ENCODE measurements at regions of chr9 and their contacts with region 1.

Region 1: GRCh38 chr9:113583551-113584427 is 120.3 kb downstream of the RGS3 start:
- DNase-seq: no peak
- ATAC-seq: no peak

Region 2: GRCh38 chr9:113446323-113446740 is 137.5 kb before region 1 on chr9:
- intact Hi-C with region 1: loop called in 1 of 2 experiments (anchors 2 kb)
- DNase-seq: no peak
- ATAC-seq: peak; percentile 63

Region 3: DNA sequence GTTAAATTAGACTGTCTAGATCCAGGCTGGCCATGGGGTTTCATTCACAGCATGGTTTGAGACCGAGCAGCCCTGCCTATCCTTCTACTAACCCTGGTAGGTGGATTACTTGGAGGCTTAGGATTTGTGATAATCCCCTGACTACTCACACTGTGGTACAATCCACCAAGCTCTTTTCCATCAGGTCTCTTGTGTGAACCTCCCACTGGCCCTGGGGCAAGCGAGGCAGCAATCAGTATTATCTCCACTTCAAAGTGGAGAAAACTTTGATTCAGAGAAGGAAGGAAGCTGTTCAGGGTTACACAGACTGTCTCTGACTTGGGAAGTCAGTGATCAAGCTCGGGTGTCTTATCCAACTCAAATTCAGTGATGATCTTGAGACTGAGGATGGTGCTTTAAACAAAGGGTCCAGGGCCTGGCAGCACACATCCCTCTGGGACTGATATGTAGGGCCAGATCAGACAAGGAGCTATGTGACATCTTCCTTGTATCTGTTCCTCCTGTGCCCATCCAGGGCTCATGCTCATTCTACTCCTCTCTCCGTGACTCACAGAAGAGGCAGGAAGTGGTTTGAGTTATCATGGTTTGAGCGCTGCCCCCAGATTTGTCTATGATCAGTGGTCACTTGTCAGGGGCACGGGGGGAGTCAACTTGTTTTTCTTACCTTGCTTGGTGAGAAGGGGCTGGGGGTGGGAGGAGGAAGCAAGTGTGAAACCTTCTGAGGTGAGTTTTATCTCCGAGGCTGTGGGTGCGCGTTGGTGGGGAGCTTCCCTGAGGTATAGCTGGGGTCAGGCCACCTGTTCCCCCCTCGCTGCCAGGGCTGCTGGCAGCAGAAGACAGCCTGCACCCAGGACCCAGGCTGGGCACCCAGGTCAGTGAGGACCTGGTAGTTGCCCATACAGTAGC is 71.7 kb before region 1 on chr9:
- intact Hi-C with region 1: no loop called
- DNase-seq: no peak
- ATAC-seq: no peak

Region 4: DNA sequence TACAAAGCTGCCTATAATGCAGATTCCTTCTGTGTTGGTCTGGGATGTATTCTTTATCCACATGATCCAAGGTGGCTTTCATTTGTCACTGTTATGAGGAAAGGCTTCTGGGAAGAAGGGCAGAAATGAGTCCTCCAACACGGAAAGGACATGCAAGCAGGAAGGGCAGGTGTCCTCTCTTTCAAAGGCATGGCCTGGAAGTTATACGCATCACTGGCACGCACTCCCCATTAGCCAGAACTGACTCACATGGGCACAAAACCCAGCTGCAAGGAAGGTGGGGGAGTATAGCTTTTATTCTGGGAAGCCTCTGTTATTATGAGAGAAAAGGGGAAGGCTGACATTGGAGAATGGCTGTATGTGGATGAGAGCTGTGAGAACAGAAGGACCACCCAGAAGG is 151.0 kb after region 1 on chr9:
- intact Hi-C with region 1: no loop called
- DNase-seq: no peak
- ATAC-seq: no peak

Region 5: DNA sequence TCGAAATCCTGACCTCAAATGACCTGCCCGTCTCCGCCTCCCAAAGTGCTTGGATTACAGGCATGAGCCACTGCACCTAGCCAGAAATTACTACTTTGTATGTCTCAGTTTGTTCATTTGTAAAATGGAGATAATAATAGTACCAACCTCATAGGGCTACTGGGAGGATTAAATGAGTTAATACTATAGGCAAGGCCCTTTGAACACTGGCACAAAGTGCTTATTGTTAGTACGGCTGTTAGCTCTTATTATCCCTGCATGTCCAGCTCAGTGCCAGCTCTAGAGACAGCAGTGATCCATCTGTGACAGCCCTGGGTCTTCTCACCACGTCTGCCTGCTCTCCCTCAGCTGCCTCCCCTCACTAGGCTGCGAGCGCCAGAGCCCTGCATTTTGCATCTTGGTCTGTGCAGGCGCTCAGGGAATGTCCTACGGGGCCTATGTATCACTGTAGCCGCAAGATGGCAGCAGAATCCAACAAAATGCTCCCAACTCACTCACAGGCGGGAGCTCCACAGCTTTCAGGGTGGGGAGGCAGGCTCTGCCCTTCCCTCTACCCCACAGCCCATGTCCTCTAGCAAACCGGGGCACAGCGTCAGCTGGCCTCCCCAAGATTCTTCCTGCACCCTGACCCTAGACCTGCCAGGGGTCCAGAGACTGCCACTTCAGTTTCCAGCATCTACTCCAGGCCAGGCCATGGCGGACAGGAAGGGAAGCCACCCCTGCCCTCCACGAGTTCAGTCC is 821.7 kb after region 1 on chr9:
- intact Hi-C with region 1: no loop called
- DNase-seq: peak; percentile 74 to 83
- ATAC-seq: peak; percentile 74

Measured in left colon (tissue), 2 donors.